Transverse colon (tissue), 4 donors: ENCODE measurements at regions of chr4 and their contacts with region 1.

Region 1: DNA sequence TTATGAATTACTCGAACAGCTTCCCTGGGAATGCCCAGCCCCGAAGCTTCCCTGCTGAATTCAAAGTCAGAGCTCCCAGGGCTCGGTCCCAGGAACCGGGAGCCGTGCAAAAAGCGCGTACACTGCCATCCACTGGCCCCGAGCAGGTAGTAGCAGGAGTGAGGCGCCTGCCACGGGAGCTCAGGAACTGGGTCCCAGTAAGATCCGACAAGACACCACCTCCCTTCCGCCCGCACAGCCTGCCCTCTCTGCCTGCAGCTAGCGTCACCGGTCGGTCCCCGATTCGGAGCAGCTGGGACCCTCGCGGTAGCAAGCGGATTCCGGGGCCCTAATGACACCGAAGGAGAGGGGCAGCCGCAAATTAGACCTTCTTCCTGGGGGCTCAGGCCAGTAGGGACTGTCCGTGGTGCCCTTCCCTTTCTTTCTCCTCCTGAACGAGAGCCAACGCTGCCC is 1.2 kb downstream of the CORIN start:
- DNase-seq: peak; percentile 77
- H3K4me3 ChIP-seq: peak overlapping the region; percentile 31 to 64 (median 38)
- H3K27ac ChIP-seq: no peak overlapping the region
- H3K4me1 ChIP-seq: peaks cover 0 to 26% (median 24%) of the 10 kb centered on the region in 4 donors
- H3K27me3 ChIP-seq: peaks cover 24% of the 10 kb centered on the region
- CTCF ChIP-seq: peak; percentile 44 to 57 (median 45)
- EP300 ChIP-seq: no peak
- POLR2A ChIP-seq: no peak

Region 2: GRCh38 chr4:47617607-47618006 is 219.1 kb before region 1 on chr4:
- in situ Hi-C with region 1: no loop called
- intact Hi-C with region 1: no loop called
- DNase-seq: no peak
- H3K4me3 ChIP-seq: no peak overlapping the region
- H3K27ac ChIP-seq: no peak overlapping the region
- H3K4me1 ChIP-seq: no peaks in the 10 kb centered on the region
- H3K27me3 ChIP-seq: no peaks in the 10 kb centered on the region
- CTCF ChIP-seq: no peak
- EP300 ChIP-seq: no peak
- POLR2A ChIP-seq: no peak

Region 3: DNA sequence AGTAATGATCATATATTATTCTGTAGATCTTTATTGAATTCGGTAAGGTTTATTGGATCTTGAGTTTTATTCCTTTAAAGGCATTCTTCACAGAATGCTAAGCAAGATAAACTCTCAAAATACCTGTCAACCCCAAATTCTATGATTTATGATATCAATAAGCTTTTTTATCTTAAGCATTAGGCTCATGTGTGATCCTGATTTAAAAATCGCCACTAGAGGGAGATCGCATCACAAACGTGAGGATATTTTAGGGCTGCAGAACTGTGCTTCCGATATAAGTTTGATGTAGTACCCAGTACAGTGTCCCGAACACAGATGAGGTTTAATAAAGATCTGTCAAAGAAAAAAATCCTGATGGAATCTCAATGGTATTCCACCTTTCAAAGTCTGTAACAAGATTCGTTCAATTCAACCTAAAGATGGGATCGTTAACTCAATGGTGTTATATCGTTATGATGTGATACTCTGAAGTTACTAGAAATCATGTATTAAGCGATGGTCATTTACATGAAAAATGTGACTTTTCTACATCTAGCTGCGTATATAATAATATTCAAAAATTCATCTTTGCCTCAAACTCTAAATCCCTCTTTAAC is 167.8 kb before region 1 on chr4:
- in situ Hi-C with region 1: loop called in 1 of 4 experiments (anchors 25 kb)
- intact Hi-C with region 1: no loop called
- DNase-seq: no peak
- H3K4me3 ChIP-seq: no peak overlapping the region
- H3K27ac ChIP-seq: no peak overlapping the region
- H3K4me1 ChIP-seq: no peaks in the 10 kb centered on the region
- H3K27me3 ChIP-seq: peaks cover 4% of the 10 kb centered on the region
- CTCF ChIP-seq: peak; percentile 50 to 73 (median 59)
- EP300 ChIP-seq: no peak
- POLR2A ChIP-seq: no peak

Region 4: GRCh38 chr4:48683784-48684666 is 847.4 kb after region 1 on chr4:
- in situ Hi-C with region 1: no loop called
- intact Hi-C with region 1: no loop called
- DNase-seq: no peak
- H3K4me3 ChIP-seq: no peak overlapping the region
- H3K27ac ChIP-seq: no peak overlapping the region
- H3K4me1 ChIP-seq: peaks cover 0 to 29% (median 14%) of the 10 kb centered on the region in 4 donors
- H3K27me3 ChIP-seq: no peaks in the 10 kb centered on the region
- CTCF ChIP-seq: no peak
- EP300 ChIP-seq: no peak
- POLR2A ChIP-seq: no peak